OCI-LY7 (cell line): ENCODE measurements at regions of chr12 and their contacts with region 1.

Region 1: GRCh38 chr12:96399919-96400797 is at the start of gene CDK17:
- DNase-seq: peak; percentile 90
- H3K4me3 ChIP-seq: peak within 1 kb of the TSS; percentile 94
- H3K27ac ChIP-seq: peak within 1 kb of the TSS; percentile 96
- H3K4me1 ChIP-seq: peaks cover 64% of the 10 kb centered on the region
- CTCF ChIP-seq: no peak
- total RNA-seq, gene CDK17: 34.5 and 36.3 TPM in 2 replicates

Region 2: GRCh38 chr12:95942524-95943329 is 457.4 kb before region 1 on chr12 and contains the start of gene CCDC38:
- CTCF ChIA-PET with region 1: no interaction called
- POLR2A ChIA-PET with region 1: no interaction called
- intact Hi-C with region 1: loop called (anchors 5 kb)
- DNase-seq: peak; percentile 91
- H3K4me3 ChIP-seq: peak within 1 kb of the TSS; percentile 81
- H3K27ac ChIP-seq: peak within 1 kb of the TSS; percentile 31
- H3K4me1 ChIP-seq: peaks cover 6% of the 10 kb centered on the region
- CTCF ChIP-seq: no peak
- total RNA-seq, gene CCDC38: 0.16 and 0.18 TPM in 2 replicates

Region 3: DNA sequence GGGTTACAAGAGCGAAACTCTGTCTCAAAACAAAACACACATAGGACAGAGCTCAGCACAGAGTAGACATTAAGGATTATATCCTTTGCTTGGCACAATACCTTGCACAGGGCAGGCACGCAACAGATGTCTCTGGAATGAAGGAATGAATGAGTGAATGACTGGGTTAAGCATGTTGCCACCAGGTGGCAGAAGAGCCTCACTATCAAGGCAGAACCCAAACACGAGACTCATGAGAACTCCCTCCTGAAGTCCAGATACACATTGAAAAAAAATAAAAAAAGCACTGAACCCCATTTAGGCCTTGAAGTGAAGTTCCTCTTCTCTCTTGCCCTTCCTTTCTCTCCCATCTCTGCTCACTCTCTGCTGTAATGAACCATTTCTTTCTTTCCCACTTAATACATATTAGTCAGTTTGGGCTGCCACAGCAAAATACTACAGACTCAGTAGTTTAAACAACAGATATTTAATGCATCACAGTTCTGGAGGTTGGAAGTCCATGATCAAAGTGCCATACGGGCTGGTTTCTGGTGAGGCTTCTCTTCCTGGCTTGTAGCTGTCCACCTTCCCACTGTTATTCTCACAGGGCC is 338.2 kb before region 1 on chr12:
- CTCF ChIA-PET with region 1: interaction called, 3 read pairs
- POLR2A ChIA-PET with region 1: no interaction called
- intact Hi-C with region 1: loop called (anchors 1 kb)
- DNase-seq: peak; percentile 87
- H3K4me3 ChIP-seq: no peak overlapping the region
- H3K27ac ChIP-seq: no peak overlapping the region
- H3K4me1 ChIP-seq: peaks cover 6% of the 10 kb centered on the region
- CTCF ChIP-seq: peak; percentile 91

Region 4: GRCh38 chr12:96303653-96304052 is 96.5 kb before region 1 on chr12:
- CTCF ChIA-PET with region 1: no interaction called
- POLR2A ChIA-PET with region 1: interaction called, 6 read pairs
- intact Hi-C with region 1: loop called (anchors 5 kb)
- DNase-seq: no peak
- H3K4me3 ChIP-seq: no peak overlapping the region
- H3K27ac ChIP-seq: no peak overlapping the region
- H3K4me1 ChIP-seq: no peaks in the 10 kb centered on the region
- CTCF ChIP-seq: no peak

Region 5: GRCh38 chr12:96375841-96376604 is 24.1 kb before region 1 on chr12:
- CTCF ChIA-PET with region 1: no interaction called
- POLR2A ChIA-PET with region 1: interaction called, 9 read pairs
- intact Hi-C with region 1: loop called (anchors 2 kb)
- DNase-seq: peak; percentile 37
- H3K4me3 ChIP-seq: peak overlapping the region; percentile 35
- H3K27ac ChIP-seq: peak overlapping the region; percentile 39
- H3K4me1 ChIP-seq: peaks cover 47% of the 10 kb centered on the region
- CTCF ChIP-seq: no peak

Region 6: DNA sequence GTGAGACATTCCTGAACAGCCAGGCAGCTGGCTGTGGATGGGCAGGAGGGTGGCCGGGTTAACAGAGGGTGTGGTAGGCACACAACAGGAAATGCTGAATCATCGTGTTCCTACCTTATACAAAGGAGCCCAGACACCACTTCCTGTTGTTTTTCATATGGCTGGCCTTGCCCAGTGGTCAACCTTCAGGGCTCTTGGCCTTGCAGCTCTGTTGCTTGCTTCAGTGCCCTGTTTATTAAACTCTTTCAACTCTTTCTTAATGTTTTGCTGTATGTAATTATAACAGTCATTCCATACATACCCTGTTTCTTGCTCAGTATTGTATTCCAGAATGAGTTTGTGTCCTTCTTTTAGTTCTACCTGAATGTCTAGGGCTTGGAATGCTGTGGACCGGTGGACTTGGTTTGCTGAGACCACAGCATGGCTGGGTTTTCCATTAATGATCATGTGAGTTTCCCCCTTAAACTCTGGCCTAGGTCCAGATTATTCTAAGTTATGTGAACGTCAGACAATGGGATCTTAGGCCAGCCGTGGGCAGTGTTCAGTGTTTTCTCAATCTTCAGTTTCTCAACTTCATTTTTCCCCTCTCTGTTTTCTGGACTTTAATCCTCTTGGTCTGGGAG is 101.1 kb after region 1 on chr12:
- CTCF ChIA-PET with region 1: no interaction called
- POLR2A ChIA-PET with region 1: interaction called, 4 read pairs
- intact Hi-C with region 1: loop called (anchors 5 kb)
- DNase-seq: peak; percentile 66
- H3K4me3 ChIP-seq: peak overlapping the region; percentile 5
- H3K27ac ChIP-seq: peak overlapping the region; percentile 17
- H3K4me1 ChIP-seq: peaks cover 26% of the 10 kb centered on the region
- CTCF ChIP-seq: no peak